GM10248 (cell line): ENCODE measurements at regions of chr10 and their contacts with region 1.

Region 1: DNA sequence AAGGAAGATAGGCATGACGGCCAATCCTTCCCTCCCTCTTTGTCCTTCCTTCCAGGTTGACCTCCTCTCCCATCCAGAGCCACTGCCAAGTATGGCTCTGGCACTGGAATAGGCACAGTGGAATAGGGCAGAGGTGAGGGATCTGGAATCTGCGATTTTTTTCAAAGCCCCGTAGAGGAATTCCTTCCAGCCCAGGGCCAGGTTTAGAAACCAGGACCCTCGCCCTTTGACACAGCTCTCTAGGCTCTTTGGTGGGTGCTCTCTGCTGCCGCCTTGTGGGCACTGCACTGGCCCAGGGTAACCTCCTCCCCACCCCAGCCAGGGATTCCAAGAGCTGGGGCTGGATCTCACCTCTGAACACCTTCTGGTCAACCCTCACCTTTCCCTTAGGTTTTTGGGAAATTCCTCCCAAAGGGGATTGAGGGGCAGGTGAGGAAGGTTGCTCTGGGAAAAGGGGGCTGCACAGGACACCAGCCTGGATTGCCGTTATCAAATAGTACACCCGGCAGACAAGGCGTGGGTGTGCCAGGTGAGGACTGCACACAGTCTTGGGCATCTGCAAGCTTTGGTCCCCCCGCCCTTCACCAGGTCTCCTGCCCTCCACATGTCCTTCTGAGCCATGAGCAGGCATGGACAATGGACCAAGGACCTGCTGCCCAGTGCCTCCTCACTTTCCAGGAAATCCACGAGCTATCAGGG is 22.8 kb downstream of the C10orf105 start:
- DNase-seq: peak; percentile 67
- CTCF ChIP-seq: peak; percentile 86

Region 2: GRCh38 chr10:71040846-71041605 is 655.8 kb before region 1 on chr10:
- CTCF ChIA-PET with region 1: no interaction called
- POLR2A ChIA-PET with region 1: no interaction called
- DNase-seq: no peak
- CTCF ChIP-seq: no peak

Region 3: GRCh38 chr10:71319042-71319799 is 377.6 kb before region 1 on chr10 and contains the start of gene SLC29A3:
- CTCF ChIA-PET with region 1: interaction called, 37 read pairs
- POLR2A ChIA-PET with region 1: no interaction called
- DNase-seq: peak; percentile 94
- CTCF ChIP-seq: peak; percentile 84

Region 4: DNA sequence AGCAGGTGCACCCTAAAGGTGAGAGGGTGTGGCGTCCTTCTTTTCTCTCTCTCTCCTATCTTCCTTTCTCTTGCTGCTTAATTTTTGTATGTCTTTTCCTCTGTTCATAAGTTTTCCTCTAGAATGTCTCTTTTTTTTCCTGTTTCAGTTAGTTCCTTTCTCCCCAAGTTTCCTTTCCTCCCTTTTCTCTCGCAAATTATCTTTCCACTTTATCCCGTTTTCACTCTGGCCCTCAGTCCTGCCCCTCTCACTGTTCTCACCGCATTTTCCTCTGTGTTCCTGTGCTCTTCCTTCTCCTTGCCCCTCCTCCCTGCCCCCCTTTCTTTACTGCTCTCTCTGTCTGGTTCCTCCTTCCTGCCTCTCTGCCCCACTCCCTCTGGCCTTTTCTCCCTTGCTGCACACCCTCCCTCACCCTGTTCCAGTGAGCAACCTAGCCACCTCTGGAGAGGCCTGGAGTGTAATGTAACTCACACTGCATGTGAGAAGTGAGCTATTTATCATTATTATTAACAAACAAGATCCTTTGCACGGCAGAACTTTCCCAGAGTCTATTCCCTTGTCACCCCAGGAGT is 135.7 kb before region 1 on chr10:
- CTCF ChIA-PET with region 1: no interaction called
- POLR2A ChIA-PET with region 1: no interaction called
- DNase-seq: no peak
- CTCF ChIP-seq: no peak

Region 5: DNA sequence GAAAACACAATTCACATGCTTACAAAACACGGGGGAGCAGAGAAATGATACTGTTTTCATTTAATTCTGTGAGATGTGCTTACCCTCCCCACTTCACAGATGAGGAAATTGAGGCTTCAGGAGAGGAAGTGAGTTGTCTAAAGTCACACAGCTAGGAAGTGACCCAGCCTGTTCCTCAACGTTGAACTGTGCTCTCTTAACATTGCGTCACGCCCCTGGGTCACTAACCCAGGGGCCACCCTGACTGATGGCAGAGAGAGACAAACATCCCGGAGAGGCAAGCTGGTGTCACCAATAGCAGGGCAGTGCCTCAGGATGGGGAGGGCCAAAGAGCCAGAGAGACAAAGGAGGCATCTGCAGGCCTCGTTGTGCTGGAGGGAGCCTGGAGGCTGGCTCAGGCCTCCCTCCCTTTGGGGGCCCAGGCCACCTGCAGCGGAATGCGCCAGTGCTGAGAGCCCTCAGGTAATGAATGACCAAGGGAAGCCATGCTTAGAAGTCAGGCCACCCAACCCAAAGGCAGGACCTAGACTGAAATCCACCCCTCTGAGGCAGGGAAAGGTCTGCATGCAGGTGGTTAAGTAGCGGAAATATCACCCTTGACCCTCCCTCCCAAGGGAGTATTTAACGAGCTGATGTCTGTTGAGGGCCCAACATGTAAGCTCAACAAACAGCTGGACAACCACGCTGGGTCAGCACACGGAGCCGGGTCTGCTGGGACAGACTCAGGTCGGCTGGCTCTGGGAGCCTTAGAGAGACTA is 58.5 kb before region 1 on chr10:
- CTCF ChIA-PET with region 1: interaction called, 18 read pairs
- POLR2A ChIA-PET with region 1: no interaction called
- DNase-seq: peak; percentile 52
- CTCF ChIP-seq: no peak

Region 6: DNA sequence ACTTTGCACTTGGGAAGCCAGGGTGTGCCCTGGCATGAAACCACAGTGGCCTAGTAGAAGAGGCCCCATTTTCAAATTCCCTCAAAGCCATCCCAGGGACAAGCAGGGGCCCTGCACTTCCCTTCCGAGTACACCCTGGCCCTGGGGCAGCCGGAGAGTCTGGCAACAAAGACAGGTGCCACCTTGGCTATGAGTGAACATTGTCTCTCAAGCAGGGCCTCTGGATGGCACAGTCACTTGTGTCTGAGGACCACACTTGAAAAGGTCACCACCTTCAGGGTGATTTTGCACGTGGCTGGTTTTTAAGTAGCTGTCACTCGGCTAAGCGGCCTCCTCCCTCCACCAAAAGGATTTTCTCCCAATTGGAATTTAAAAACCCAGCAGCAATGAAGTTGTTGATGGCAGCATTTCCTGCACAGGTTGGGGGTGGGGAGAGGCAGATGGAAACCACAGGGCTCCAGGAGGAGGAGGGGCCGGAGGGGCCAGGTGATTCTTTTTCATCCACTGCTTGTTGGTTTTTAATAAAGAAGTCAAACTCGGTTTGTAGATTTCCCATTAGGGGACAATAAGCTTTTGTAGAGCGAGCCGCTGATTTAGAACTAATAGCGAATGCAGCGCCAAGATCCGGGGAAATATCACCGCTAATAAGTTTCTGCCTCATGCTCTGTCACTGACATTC is 11.1 kb before region 1 on chr10:
- CTCF ChIA-PET with region 1: interaction called, 16 read pairs
- POLR2A ChIA-PET with region 1: no interaction called
- DNase-seq: no peak
- CTCF ChIP-seq: no peak

Region 7: GRCh38 chr10:71719042-71719441 is 22.3 kb after region 1 on chr10:
- CTCF ChIA-PET with region 1: interaction called, 168 read pairs
- POLR2A ChIA-PET with region 1: no interaction called
- DNase-seq: no peak
- CTCF ChIP-seq: no peak

Region 8: GRCh38 chr10:71771821-71772617 is 75.2 kb after region 1 on chr10:
- CTCF ChIA-PET with region 1: interaction called, 60 read pairs
- POLR2A ChIA-PET with region 1: no interaction called
- DNase-seq: no peak
- CTCF ChIP-seq: no peak